ENCODE measurements at regions of chr7 and their contacts with region 1.

Region 1: GRCh38 chr7:155815332-155816191 is 3.3 kb upstream of the SHH start:
- DNase-seq: peak; percentile 82
- H3K4me3 Mint-ChIP-seq: no peak overlapping the region
- H3K27ac Mint-ChIP-seq: no peak overlapping the region
- H3K4me1 Mint-ChIP-seq: peaks cover 17% of the 10 kb centered on the region
- H3K27me3 Mint-ChIP-seq: peaks cover 45% of the 10 kb centered on the region

Region 2: GRCh38 chr7:154857767-154858681 is 957.5 kb before region 1 on chr7:
- CTCF ChIA-PET with region 1: no interaction called
- POLR2A ChIA-PET with region 1: no interaction called
- intact Hi-C with region 1: no loop called
- DNase-seq: no peak
- H3K4me3 Mint-ChIP-seq: no peak overlapping the region
- H3K27ac Mint-ChIP-seq: no peak overlapping the region
- H3K4me1 Mint-ChIP-seq: no peaks in the 10 kb centered on the region
- H3K27me3 Mint-ChIP-seq: peaks cover 2% of the 10 kb centered on the region

Region 3: DNA sequence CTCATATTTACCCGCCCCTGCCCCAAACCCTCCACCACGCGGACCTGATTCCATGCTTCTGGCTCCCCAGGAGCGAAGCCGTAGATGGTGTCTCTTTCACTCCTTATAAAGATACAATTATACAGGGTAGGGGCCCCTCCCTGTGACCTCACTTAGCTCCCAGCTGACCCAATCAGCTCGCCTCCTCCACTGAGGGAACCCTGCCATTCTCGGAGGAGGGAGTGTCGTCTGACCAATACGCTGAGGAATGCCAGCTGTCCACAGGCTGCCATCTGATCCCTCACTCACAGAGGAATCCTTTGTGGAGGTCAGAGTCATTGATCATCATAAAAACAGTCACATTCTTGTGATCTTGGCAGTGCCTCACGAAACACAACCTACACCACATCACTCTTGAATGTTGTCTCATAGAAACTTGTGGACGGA is 585.4 kb before region 1 on chr7:
- CTCF ChIA-PET with region 1: no interaction called
- POLR2A ChIA-PET with region 1: no interaction called
- intact Hi-C with region 1: no loop called
- DNase-seq: no peak
- H3K4me3 Mint-ChIP-seq: no peak overlapping the region
- H3K27ac Mint-ChIP-seq: no peak overlapping the region
- H3K4me1 Mint-ChIP-seq: no peaks in the 10 kb centered on the region
- H3K27me3 Mint-ChIP-seq: no peaks in the 10 kb centered on the region

Region 4: DNA sequence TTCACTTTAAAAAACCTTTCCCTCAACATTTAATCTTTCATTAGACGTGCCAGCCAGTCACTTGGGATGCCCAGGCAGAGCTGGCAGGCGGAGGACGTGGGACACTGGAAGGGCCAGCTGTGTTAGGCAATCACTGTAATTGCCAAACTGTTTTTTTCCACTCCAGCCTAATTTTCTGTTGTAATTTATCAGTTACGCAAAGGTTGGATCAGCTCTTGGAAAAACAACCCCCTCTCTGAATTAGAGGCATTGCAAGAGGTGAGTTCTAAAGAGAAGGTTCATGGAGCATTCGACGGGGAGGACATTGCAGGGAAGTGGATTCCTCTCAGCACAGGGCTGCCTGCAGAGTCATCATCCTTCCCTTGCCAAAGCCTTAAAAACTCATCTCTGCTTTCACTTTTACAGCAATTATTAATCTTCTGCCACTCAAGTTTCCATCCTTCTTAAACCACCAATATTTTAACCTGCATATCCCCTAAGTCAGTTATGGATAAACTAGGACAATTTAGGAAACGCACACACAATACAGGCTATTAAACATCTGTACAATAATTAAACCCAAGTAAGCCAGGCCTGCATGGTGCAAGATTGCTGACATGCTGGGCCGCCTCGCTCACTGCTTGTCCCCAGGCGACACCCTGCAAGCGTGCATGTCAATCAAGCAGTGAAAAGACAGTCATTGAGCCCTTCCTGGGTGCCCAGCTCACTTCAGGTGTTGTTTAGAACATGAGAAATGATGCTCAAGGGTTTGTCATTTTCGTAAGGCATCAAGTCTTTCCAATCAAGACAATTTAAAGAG is 552.7 kb after region 1 on chr7:
- CTCF ChIA-PET with region 1: no interaction called
- POLR2A ChIA-PET with region 1: no interaction called
- intact Hi-C with region 1: no loop called
- DNase-seq: no peak
- H3K4me3 Mint-ChIP-seq: no peak overlapping the region
- H3K27ac Mint-ChIP-seq: no peak overlapping the region
- H3K4me1 Mint-ChIP-seq: no peaks in the 10 kb centered on the region
- H3K27me3 Mint-ChIP-seq: no peaks in the 10 kb centered on the region

Region 5: DNA sequence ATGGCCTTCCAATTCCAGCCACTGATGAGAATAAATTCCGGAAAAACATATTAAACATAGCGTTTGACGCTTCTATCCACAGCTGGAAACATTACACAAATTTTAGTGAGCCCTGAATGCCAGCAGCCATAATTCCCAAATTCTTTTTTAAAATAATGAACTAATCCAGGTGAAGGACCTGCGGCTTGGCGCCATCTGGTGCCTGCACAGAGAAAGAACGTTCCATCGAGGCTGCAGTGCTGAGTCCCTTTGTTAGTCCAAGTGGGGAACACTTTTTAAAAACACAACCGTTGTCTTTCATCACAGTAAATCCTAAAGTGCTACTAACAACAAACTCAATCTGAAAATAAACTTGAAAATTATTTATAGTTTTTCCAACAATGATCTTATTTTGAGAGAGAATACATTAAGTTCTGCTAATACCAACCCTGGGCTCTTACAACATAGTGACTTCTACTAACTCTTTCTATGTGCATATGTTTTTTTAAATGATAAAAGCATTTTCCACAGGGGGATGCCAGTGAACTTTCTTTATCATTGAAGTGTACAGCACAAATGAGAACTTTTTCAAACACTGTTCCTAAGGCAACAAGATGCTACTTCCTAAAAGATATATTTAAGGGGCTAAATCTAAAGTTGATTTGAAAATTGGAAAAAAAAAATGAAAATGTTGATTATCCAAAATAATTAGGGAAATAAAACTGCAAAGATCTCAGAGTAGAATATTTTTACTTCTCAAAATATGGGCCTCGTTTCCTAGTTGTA is 658.1 kb after region 1 on chr7:
- CTCF ChIA-PET with region 1: interaction called, 5 read pairs
- POLR2A ChIA-PET with region 1: no interaction called
- intact Hi-C with region 1: loop called (anchors 1 kb)
- DNase-seq: peak; percentile 43
- H3K4me3 Mint-ChIP-seq: no peak overlapping the region
- H3K27ac Mint-ChIP-seq: no peak overlapping the region
- H3K4me1 Mint-ChIP-seq: no peaks in the 10 kb centered on the region
- H3K27me3 Mint-ChIP-seq: peaks cover 18% of the 10 kb centered on the region